Panc1 (cell line): ENCODE measurements at regions of chr18 and their contacts with region 1.

Region 1: DNA sequence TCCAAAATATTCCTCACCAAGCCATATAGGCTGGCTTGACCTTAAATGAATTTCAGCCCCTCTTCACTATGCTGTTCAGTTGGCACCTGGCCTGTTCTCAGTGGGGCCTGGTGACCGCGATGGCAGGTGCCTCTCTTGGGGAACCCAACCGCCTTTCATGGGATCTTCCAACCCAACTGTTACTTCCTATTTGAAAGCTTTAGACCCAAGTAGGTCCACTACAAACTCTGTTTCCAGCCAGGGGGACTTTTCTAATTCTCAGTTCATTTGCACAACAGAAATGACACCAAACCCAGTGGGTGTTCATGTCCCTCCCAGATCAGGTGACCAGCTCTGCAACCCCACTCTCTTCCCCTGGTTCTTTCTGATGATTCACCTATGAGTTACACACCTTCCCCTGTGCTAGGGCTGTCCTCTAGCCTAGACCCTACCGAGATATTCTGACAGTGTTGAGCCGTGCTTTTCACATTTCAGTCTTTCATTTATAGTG is 35.6 kb upstream of the NDUFV2 start:
- DNase-seq: no peak
- ATAC-seq: no peak
- H3K4me3 ChIP-seq: no peak overlapping the region
- H3K27ac ChIP-seq: no peak overlapping the region
- H3K4me1 ChIP-seq: no peaks in the 10 kb centered on the region
- H3K27me3 ChIP-seq: no peaks in the 10 kb centered on the region
- CTCF ChIP-seq: no peak

Region 2: GRCh38 chr18:8882632-8883408 is 184.0 kb before region 1 on chr18:
- CTCF ChIA-PET with region 1: no interaction called
- POLR2A ChIA-PET with region 1: interaction called, 10 read pairs
- in situ Hi-C with region 1: no loop called
- intact Hi-C with region 1: no loop called
- DNase-seq: no peak
- ATAC-seq: no peak
- H3K4me3 ChIP-seq: no peak overlapping the region
- H3K27ac ChIP-seq: no peak overlapping the region
- H3K4me1 ChIP-seq: no peaks in the 10 kb centered on the region
- H3K27me3 ChIP-seq: no peaks in the 10 kb centered on the region
- CTCF ChIP-seq: peak; percentile 31; the same call in 1 of the 2 replicates

Region 3: DNA sequence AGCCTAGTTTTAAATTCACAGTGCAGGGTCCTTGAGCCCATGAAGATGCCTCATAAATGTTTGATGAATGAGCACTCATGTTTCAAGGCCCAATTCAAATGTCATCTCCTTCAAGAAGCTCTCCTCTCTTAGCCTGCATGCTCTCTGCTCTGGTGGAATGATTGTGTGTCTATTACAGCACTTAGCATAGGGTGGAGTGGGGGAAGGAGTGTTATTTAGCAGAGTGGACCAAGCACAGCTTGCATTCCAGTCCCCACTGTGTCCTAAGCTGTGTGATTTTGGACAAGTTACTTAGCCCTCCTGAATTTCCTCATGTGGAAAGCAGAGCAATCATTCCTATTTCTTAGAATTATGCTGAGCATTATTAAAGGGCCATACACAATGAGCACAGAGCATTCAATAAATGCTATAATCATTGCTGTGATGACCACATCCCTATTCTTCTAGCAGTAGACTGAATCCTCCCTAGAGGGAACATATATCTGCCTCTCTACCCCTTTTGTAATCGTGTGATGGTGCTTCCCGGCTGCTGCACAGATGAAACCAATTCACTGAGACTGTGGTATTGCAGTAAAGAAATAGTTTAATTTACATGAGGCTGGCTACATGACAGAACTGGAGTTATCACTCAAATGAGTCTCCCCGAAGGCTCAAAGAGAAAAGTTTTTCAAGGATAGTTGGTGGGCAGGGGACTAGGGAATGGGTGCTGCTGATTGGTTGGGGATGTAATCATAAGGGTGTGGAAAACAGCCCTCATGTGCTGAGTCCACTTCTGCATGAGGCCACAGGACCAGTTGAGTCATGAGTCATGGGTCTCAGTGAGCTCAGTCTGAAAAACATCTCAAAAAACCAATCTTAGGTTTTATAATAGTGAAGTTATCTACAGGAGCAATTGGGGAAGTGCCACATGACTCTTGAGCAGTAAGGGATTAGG is 137.7 kb before region 1 on chr18:
- CTCF ChIA-PET with region 1: no interaction called
- POLR2A ChIA-PET with region 1: no interaction called
- in situ Hi-C with region 1: no loop called
- intact Hi-C with region 1: no loop called
- DNase-seq: no peak
- ATAC-seq: no peak
- H3K4me3 ChIP-seq: no peak overlapping the region
- H3K27ac ChIP-seq: no peak overlapping the region
- H3K4me1 ChIP-seq: no peaks in the 10 kb centered on the region
- H3K27me3 ChIP-seq: no peaks in the 10 kb centered on the region
- CTCF ChIP-seq: no peak

Region 4: DNA sequence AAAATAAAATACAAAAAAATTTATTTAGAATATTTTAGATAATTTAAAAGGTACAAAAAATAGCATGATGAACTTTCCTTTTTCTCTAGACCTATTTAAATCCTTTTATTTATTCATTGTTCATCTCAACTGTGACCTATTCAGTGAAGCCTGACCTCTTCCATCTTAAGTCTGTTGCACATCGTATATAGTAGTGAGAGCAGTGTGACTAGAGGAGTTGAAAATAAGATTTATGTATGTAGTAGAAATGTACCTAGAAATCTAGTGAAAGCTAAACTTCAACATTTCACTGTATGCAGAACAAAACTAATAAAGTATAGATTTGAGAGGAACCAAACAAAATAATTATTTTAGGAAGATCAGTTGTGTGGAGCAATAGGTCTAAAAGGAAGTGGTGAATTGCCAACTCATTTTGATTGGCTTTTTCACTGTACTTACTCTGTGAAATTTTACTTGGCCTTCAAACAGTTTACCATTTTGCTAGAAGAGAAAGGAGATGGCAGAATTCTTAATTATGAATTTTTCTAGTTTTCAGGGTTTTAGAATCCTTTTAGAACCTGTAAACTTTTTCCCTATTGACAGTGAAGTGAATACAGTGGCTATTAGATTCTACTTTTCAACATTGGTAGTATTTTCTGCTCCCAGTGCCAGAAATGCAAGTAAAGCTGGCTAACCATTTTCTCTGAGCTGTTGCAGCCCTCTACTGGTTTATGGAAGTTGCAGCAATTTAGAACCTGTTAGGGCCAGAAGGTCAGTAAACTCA is 80.8 kb after region 1 on chr18:
- CTCF ChIA-PET with region 1: no interaction called
- POLR2A ChIA-PET with region 1: no interaction called
- in situ Hi-C with region 1: no loop called
- intact Hi-C with region 1: loop called (anchors 2 kb)
- DNase-seq: no peak
- ATAC-seq: peak; percentile 91
- H3K4me3 ChIP-seq: no peak overlapping the region
- H3K27ac ChIP-seq: no peak overlapping the region
- H3K4me1 ChIP-seq: peaks cover 22% of the 10 kb centered on the region
- H3K27me3 ChIP-seq: no peaks in the 10 kb centered on the region
- CTCF ChIP-seq: peak; percentile 78

Region 5: DNA sequence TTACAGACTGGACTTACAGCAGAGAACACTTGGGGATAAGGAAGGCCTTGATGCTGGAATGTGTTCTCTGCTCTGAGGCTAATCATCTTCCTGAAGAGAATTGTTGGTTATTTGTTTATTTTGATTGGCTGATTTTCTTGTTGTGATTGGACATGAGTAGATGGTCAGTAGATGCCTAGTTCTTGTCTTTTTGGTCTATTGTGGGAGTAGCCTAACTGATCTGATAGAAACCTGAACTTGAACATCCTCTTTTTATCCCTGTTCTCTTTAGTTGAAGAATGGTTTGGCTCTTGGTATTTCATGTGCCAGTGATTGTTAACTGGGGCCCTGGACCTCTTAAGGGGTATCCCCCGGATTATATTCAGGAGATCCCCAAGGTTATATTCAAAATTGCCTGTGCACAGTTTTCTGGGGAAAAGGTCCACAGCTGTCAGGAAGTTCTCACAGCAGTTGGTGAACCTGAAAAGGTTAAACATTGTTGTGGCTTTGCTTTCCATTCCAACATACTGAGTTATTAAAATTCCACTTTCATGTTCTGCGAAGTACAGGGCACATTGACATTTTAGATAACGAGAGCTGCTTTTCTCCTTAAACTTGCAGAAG is 281.3 kb after region 1 on chr18:
- CTCF ChIA-PET with region 1: no interaction called
- POLR2A ChIA-PET with region 1: no interaction called
- in situ Hi-C with region 1: no loop called
- intact Hi-C with region 1: no loop called
- DNase-seq: no peak
- ATAC-seq: peak; percentile 88
- H3K4me3 ChIP-seq: no peak overlapping the region
- H3K27ac ChIP-seq: peak overlapping the region; percentile 57
- H3K4me1 ChIP-seq: peaks cover 16% of the 10 kb centered on the region
- H3K27me3 ChIP-seq: no peaks in the 10 kb centered on the region
- CTCF ChIP-seq: no peak